Caco-2 (cell line): ENCODE measurements at regions of chr10 and their contacts with region 1.

Region 1: DNA sequence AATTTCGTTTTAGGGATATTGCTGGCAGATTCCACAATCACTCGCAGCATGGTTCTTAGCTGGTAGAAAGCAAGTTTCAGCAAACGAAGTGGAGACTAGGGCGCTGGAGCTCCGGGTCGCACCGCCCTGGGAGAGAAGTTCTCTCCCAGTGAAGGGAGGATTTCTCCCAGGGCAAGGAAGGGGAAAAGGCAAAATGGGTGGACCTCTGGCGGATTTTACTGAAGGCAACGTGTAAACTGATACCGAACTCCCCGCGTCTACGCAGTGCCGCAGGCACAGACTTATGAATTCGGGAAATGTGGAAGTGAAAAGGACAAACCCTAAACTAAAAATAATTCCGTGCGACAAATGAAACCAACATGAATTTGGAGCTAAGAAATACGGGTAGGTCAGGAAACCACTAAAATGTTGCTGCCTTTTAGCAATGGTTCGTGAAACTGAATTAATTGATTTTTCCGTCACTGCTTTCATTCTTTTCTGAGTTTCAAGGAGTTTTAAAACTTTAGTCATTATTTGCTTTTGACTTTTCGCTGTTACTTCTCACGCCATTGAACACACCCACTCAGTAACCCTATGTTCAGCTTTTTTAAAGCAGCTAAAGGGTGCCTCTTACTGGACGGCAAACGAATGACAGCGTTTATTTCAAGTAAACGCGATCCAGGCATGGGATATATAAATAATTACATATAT is at the start of gene MYOF:
- DNase-seq: peak; percentile 76 to 78
- H3K4me3 ChIP-seq: peak within 1 kb of the TSS; percentile 56
- H3K4me3 Mint-ChIP-seq: peak within 1 kb of the TSS; percentile 92
- H3K27ac Mint-ChIP-seq: peak within 1 kb of the TSS; percentile 94
- H3K4me1 ChIP-seq: peaks cover 21% of the 10 kb centered on the region
- H3K4me1 Mint-ChIP-seq: peaks cover 23% of the 10 kb centered on the region
- H3K27me3 ChIP-seq: no peaks in the 10 kb centered on the region
- H3K27me3 Mint-ChIP-seq: no peaks in the 10 kb centered on the region
- CTCF ChIP-seq: peak; percentile 71
- total RNA-seq, gene MYOF: 148 and 176 TPM in 2 replicates

Region 2: GRCh38 chr10:93376372-93377293 is 105.7 kb before region 1 on chr10:
- CTCF ChIA-PET with region 1: interaction called, 112 read pairs
- POLR2A ChIA-PET with region 1: interaction called, 3 read pairs
- intact Hi-C with region 1: loop called (anchors 1 kb)
- DNase-seq: peak; percentile 56 to 80
- H3K4me3 ChIP-seq: no peak overlapping the region
- H3K4me3 Mint-ChIP-seq: no peak overlapping the region
- H3K27ac Mint-ChIP-seq: peak overlapping the region; percentile 60
- H3K4me1 ChIP-seq: 0 out of 2 replicates have a peak, but pooled peaks cover 13% of the 10 kb centered on the region
- H3K4me1 Mint-ChIP-seq: peaks cover 27% of the 10 kb centered on the region
- H3K27me3 ChIP-seq: no peaks in the 10 kb centered on the region
- H3K27me3 Mint-ChIP-seq: no peaks in the 10 kb centered on the region
- CTCF ChIP-seq: peak; percentile 89 to 91

Region 3: GRCh38 chr10:93437088-93437945 is 45.0 kb before region 1 on chr10:
- CTCF ChIA-PET with region 1: interaction called, 12 read pairs
- POLR2A ChIA-PET with region 1: interaction called, 22 read pairs
- intact Hi-C with region 1: loop called (anchors 1 kb)
- DNase-seq: peak; percentile 84 to 88
- H3K4me3 ChIP-seq: no peak overlapping the region
- H3K4me3 Mint-ChIP-seq: peak overlapping the region; percentile 60
- H3K27ac Mint-ChIP-seq: peak overlapping the region; percentile 96
- H3K4me1 ChIP-seq: peaks cover 73% of the 10 kb centered on the region
- H3K4me1 Mint-ChIP-seq: peaks cover 75% of the 10 kb centered on the region
- H3K27me3 ChIP-seq: no peaks in the 10 kb centered on the region
- H3K27me3 Mint-ChIP-seq: no peaks in the 10 kb centered on the region
- CTCF ChIP-seq: no peak

Region 4: GRCh38 chr10:93458821-93459257 is 23.5 kb before region 1 on chr10:
- CTCF ChIA-PET with region 1: interaction called, 10 read pairs
- POLR2A ChIA-PET with region 1: interaction called, 7 read pairs
- intact Hi-C with region 1: loop called (anchors 1 kb)
- DNase-seq: peak; percentile 90 to 96
- H3K4me3 ChIP-seq: no peak overlapping the region
- H3K4me3 Mint-ChIP-seq: peak overlapping the region; percentile 69
- H3K27ac Mint-ChIP-seq: peak overlapping the region; percentile 98
- H3K4me1 ChIP-seq: peaks cover 65% of the 10 kb centered on the region
- H3K4me1 Mint-ChIP-seq: peaks cover 51% of the 10 kb centered on the region
- H3K27me3 ChIP-seq: no peaks in the 10 kb centered on the region
- H3K27me3 Mint-ChIP-seq: no peaks in the 10 kb centered on the region
- CTCF ChIP-seq: no peak

Region 5: GRCh38 chr10:93515071-93516005 is 33.0 kb after region 1 on chr10:
- CTCF ChIA-PET with region 1: interaction called, 16 read pairs
- POLR2A ChIA-PET with region 1: interaction called, 7 read pairs
- intact Hi-C with region 1: loop called (anchors 1 kb)
- DNase-seq: no peak
- H3K4me3 ChIP-seq: no peak overlapping the region
- H3K4me3 Mint-ChIP-seq: no peak overlapping the region
- H3K27ac Mint-ChIP-seq: no peak overlapping the region
- H3K4me1 ChIP-seq: no peaks in the 10 kb centered on the region
- H3K4me1 Mint-ChIP-seq: peaks cover 3% of the 10 kb centered on the region
- H3K27me3 ChIP-seq: no peaks in the 10 kb centered on the region
- H3K27me3 Mint-ChIP-seq: no peaks in the 10 kb centered on the region
- CTCF ChIP-seq: no peak

Region 6: DNA sequence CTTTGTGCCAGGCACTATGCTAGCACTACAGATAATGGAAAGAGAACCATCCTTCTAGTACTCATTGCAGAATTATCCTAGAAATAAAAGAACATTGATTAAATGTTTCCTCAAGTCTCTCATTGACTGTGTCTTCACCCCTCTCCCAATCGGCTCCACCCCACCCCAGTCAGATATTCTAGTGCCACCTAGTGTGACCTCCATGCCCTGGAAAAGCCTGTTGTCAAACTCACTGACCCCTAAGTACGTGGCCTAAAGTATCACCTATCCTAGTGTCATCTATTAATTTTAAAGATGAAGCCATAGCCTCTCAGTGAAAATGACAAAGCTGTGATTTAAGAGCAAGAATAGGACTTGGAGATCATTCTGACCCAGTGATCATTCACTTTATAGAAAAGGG is 301.8 kb after region 1 on chr10:
- CTCF ChIA-PET with region 1: no interaction called
- POLR2A ChIA-PET with region 1: no interaction called
- intact Hi-C with region 1: no loop called
- DNase-seq: no peak
- H3K4me3 ChIP-seq: no peak overlapping the region
- H3K4me3 Mint-ChIP-seq: no peak overlapping the region
- H3K27ac Mint-ChIP-seq: no peak overlapping the region
- H3K4me1 ChIP-seq: no peaks in the 10 kb centered on the region
- H3K4me1 Mint-ChIP-seq: peaks cover 4% of the 10 kb centered on the region
- H3K27me3 ChIP-seq: no peaks in the 10 kb centered on the region
- H3K27me3 Mint-ChIP-seq: peaks cover 2% of the 10 kb centered on the region
- CTCF ChIP-seq: no peak